Endothelial cell of umbilical vein (primary cell): ENCODE measurements at regions of chr14 and their contacts with region 1.

Region 1: DNA sequence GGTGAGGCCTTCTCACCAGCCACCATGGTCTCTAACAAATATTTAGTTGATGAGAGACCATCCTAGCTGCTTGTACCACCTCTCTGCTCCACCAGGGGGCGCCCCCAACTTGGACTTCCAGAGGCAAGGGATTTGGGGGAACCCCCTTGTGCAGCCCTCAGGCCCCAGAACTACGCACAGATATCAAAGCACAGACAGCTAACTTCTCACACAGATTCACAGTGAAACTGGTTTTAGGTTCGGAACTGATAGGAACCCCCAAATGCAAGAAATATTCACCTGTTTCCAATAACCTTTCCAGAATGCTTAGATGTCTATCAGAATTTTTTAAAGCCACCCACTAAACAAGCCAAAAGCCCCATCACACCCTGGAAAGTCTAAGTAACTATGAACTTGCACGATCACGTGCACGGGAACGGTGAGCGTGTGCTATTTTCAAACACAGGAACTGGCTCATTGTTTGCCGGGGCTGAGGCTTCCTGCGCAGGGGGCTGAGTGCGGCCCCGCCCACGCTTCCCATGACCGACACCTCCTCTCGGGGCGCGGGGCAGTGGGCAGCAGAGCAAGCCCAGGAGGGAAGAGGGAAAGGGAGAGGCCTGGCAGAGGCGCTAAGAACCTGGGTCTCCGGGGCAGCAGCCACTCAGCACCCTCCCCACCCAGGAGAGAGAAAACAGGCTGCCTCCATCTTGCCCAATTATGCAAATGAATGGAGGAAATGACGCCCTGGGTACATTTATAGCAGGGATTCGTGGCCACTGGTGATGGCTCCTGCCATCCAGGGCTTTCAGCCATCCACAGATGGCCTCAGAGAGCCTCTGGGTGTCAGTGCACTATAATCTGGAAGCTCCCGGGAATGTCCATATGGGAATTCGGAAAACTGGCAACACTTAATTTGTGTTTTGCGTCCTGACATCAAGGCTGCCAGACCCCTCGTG is 79.4 kb upstream of the GPR68 start:
- DNase-seq: peak; percentile 93
- H3K4me3 ChIP-seq: no peak overlapping the region
- H3K27ac ChIP-seq: peak overlapping the region; percentile 82
- H3K4me1 ChIP-seq: peaks cover 53% of the 10 kb centered on the region
- H3K27me3 ChIP-seq: no peaks in the 10 kb centered on the region
- CTCF ChIP-seq: peak; percentile 84 to 93
- POLR2A ChIP-seq: no peak

Region 2: DNA sequence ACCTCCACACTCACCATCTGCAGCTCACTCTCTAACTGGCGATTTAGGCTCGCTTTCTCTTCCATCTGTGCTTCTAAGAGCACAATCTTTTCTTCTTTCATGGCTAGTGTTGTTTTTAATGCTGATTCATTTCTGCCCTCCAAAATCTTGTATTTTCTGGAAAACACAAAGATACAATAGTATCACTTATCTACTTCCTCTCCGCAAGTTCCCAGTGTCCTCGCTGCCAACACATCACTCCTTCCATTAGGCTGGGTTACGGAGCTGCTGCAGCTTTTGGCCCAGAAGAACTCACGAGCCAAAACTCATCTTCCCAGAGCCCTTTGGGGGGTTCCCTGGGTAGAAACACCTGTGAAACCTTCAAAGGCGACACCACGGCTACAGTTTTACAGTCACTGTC is 15.6 kb before region 1 on chr14:
- CTCF ChIA-PET with region 1: interaction called, 10 read pairs
- POLR2A ChIA-PET with region 1: no interaction called
- dilution Hi-C with region 1: no loop called
- intact Hi-C with region 1: no loop called
- DNase-seq: peak; percentile 56
- H3K4me3 ChIP-seq: no peak overlapping the region
- H3K27ac ChIP-seq: no peak overlapping the region
- H3K4me1 ChIP-seq: peaks cover 9% of the 10 kb centered on the region
- H3K27me3 ChIP-seq: no peaks in the 10 kb centered on the region
- CTCF ChIP-seq: no peak
- POLR2A ChIP-seq: no peak

Region 3: GRCh38 chr14:91373591-91374254 is 49.8 kb after region 1 on chr14:
- CTCF ChIA-PET with region 1: interaction called, 10 read pairs
- POLR2A ChIA-PET with region 1: no interaction called
- dilution Hi-C with region 1: no loop called
- intact Hi-C with region 1: loop called (anchors 1 kb)
- DNase-seq: peak; percentile 63
- H3K4me3 ChIP-seq: peak overlapping the region in 1 of 3 experiments; percentile 25
- H3K27ac ChIP-seq: peak overlapping the region; percentile 29
- H3K4me1 ChIP-seq: peaks cover 56% of the 10 kb centered on the region
- H3K27me3 ChIP-seq: no peaks in the 10 kb centered on the region
- CTCF ChIP-seq: no peak
- POLR2A ChIP-seq: no peak

Region 4: GRCh38 chr14:91402771-91403600 is 79.0 kb after region 1 on chr14:
- CTCF ChIA-PET with region 1: interaction called, 32 read pairs
- POLR2A ChIA-PET with region 1: no interaction called
- dilution Hi-C with region 1: no loop called
- intact Hi-C with region 1: no loop called
- DNase-seq: peak; percentile 94
- H3K4me3 ChIP-seq: peak overlapping the region in 1 of 3 experiments; percentile 13
- H3K27ac ChIP-seq: peak overlapping the region; percentile 36
- H3K4me1 ChIP-seq: peaks cover 32% of the 10 kb centered on the region
- H3K27me3 ChIP-seq: no peaks in the 10 kb centered on the region
- CTCF ChIP-seq: no peak
- POLR2A ChIP-seq: no peak

Region 5: DNA sequence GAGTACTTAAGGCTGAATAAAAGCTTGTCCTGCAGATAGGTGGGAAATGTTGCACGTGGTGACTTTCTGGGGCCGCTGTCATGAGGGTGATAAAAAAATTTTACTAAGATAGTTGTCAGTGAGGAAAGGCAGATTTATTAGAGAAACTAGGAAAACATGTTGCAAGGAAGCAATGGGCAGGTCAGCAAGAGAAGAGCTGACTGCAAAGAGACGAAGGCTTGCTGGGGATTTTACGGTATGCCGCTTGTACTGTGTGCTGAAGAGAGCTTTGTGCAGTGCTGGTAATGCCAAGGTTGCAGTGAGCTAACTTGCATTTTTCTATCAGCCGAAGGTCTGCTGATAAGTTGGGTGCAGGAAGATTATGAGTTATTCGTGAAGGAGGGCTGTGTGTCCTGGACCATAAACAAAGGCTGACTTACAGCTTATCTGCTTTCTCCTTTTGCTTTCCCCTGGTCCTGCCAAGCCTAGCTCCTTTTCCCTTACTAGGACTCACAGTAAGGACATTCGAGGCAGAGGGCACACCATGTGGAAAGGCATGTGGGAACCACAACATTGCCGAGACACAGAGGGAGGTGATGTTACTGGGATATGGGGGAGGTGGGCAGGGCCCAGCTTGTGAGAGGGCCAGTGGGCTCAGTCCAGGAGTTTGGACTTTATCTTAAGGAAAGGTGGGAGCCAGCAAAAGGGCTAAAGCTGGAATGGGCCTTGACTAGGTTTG is 101.0 kb after region 1 on chr14:
- CTCF ChIA-PET with region 1: interaction called, 196 read pairs
- POLR2A ChIA-PET with region 1: no interaction called
- dilution Hi-C with region 1: no loop called
- intact Hi-C with region 1: no loop called
- DNase-seq: no peak
- H3K4me3 ChIP-seq: no peak overlapping the region
- H3K27ac ChIP-seq: no peak overlapping the region
- H3K4me1 ChIP-seq: no peaks in the 10 kb centered on the region
- H3K27me3 ChIP-seq: no peaks in the 10 kb centered on the region
- CTCF ChIP-seq: no peak
- POLR2A ChIP-seq: no peak

Region 6: GRCh38 chr14:91464615-91465205 is 140.8 kb after region 1 on chr14:
- CTCF ChIA-PET with region 1: no interaction called
- POLR2A ChIA-PET with region 1: no interaction called
- dilution Hi-C with region 1: no loop called
- intact Hi-C with region 1: no loop called
- DNase-seq: no peak
- H3K4me3 ChIP-seq: no peak overlapping the region
- H3K27ac ChIP-seq: no peak overlapping the region
- H3K4me1 ChIP-seq: no peaks in the 10 kb centered on the region
- H3K27me3 ChIP-seq: no peaks in the 10 kb centered on the region
- CTCF ChIP-seq: no peak
- POLR2A ChIP-seq: no peak